AG04450 (cell line): ENCODE measurements at regions of chr3 and their contacts with region 1.

Region 1: DNA sequence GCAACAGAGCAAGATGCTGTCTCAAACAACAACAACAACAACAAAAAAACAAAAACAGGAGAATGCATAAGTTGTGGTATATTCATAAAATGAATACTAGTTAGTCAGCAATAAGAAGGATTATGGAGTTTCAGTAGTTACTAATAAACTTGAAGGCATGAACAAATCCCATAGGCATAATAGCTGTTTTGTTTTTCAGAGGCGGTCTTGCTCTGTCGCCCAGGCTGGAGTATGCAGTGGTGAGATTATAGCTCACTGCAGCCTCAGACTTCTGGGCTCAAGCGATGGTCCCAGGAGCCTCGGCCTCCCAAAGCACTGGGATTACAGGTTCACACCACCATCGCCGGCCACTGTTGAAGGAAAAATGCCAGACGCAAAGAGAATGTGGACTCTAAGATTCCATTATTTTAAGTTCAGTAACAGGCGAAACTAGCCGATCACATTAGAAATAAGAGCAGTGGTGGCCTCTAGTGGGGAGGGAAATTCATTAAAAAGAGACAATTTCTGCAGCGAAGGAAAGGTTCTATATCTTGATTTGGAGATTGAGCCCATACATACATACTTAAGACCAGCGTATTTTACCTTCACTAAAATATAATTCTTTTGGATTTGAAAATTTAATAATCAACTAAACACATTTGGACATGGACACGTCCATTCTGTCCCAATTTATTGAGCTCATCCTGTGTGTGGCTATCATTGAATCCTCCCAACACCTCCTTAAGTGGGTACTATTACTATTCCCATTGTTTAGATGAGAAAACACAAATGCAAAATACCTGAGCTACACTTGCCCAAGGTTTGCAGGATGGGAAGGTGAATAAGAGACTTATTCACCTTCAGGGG is 27.4 kb upstream of the HDAC11 start:
- DNase-seq: peak; percentile 11
- H3K4me3 ChIP-seq: no peak overlapping the region
- H3K27ac ChIP-seq: no peak overlapping the region
- H3K27me3 ChIP-seq: no peaks in the 10 kb centered on the region
- CTCF ChIP-seq: peak; percentile 73

Region 2: DNA sequence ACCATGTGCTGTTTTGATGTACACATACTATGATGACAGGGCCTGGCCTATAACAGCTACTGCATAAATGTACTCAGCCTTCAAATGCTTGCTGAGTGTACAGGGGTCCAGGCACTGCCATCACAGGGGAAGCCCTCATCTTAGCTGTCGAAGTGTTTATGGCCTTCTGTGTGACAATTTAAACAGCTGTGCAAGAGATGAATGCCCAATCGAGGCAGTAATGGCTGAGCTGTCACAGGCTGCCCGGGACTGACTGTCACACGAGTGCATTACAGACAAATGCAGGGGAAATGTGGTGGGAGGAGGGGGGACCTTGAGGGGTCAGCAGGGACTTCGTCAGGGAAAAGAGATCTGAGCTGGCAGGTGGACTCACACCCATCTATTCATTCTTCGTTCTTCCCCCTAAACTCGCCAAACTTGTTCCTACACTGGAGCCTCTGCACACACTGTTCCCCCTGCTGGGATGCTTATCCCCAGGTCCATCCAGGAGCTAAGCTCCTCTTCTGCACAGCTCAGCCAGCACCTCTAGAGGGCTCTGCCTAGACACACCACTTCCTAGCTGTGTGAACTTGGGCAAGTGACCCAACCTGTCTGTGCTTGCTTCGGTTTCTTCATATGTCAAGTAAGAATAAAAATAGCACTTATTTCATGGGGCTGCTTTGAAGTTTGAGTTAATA is 223.3 kb before region 1 on chr3:
- CTCF ChIA-PET with region 1: interaction called, 10 read pairs
- POLR2A ChIA-PET with region 1: no interaction called
- DNase-seq: no peak
- H3K4me3 ChIP-seq: no peak overlapping the region
- H3K27ac ChIP-seq: no peak overlapping the region
- H3K27me3 ChIP-seq: peaks cover 13% of the 10 kb centered on the region
- CTCF ChIP-seq: peak; percentile 29; the same call in 1 of the 2 replicates

Region 3: DNA sequence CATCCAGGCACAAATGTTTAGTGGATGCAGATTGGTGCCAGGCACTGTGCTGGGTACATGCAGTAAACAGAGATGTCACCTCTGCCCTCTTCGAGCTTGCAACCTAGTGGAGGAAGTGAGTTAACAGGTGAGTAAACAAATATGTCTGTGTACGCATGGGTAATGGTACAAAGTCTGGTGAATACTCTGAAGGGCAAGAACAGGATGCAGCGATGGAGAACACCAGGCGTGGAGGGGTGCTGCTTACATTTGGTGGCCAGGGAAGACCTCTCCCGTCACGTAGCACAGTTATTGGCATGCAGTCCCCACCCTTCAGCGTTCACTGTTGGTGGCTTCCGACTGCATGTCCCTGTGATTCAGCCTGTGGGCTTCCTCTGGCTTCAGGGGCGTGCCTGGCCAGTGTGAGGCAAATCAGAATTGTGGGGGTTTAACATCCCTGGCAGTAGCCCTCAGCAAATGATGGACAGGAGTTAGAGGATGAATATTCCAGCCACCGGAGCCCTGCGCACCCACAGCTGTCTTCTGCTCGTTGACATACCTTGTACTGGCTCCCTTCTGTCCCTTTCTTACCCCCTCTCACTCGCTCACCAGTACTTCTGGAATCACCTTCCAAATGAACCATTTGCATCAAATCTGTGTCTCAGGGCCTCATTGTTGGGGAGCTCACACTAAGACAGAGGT is 18.3 kb after region 1 on chr3:
- CTCF ChIA-PET with region 1: interaction called, 14 read pairs
- POLR2A ChIA-PET with region 1: no interaction called
- DNase-seq: no peak
- H3K4me3 ChIP-seq: no peak overlapping the region
- H3K27ac ChIP-seq: no peak overlapping the region
- H3K27me3 ChIP-seq: peaks cover 15% of the 10 kb centered on the region
- CTCF ChIP-seq: no peak

Region 4: DNA sequence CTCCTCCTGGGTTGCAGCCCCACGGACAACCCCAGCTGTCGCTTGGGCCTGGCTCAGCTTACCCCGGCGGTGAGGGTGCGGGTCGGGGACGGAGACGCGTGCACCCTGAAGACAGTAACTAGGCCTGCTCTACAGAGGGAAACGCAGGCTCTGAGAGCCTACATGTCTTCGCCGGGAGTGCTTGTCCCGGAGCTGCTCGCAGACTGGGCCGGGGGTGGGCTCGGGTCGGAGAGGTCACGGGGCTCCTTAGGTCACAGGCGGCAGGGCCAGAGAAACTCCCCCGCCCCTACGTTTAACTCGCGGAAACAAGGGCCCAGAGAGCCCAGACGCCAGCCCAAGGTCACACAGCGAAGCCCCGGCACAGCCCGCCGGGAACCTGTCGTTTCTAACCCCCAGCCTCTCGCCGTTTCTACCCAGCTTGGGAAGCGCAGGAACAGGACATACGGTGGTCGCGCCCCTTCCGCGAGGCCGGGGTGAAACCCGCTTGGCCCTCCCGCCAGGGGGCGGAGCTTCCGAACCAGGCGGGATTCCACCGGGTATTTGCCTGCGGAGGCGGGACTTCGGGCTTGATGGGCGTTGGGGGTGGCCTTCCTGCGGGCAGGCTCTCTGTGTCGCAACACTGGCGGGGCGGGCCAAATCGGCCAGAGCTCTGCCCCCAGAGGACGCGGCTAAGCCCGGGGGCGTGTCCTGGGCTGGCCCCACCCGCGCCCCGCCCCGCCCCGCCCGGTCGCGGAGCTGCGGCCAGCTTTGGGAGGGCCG is 27.0 kb after region 1 on chr3 and contains the start of gene HDAC11:
- CTCF ChIA-PET with region 1: interaction called, 46 read pairs
- POLR2A ChIA-PET with region 1: interaction called, 9 read pairs
- DNase-seq: peak; percentile 90
- H3K4me3 ChIP-seq: peak within 1 kb of the TSS; percentile 72
- H3K27ac ChIP-seq: peak within 1 kb of the TSS; percentile 21
- H3K27me3 ChIP-seq: peaks cover 6% of the 10 kb centered on the region
- CTCF ChIP-seq: no peak
- polyA plus RNA-seq, gene HDAC11: 7.1 and 7.5 TPM in 2 replicates